AG04449 (cell line): ENCODE measurements at regions of chr17 and their contacts with region 1.

Region 1: GRCh38 chr17:76182016-76182764 is 41.1 kb upstream of the FOXJ1 start:
- DNase-seq: peak; percentile 14
- H3K4me3 ChIP-seq: no peak overlapping the region
- CTCF ChIP-seq: peak; percentile 91

Region 2: DNA sequence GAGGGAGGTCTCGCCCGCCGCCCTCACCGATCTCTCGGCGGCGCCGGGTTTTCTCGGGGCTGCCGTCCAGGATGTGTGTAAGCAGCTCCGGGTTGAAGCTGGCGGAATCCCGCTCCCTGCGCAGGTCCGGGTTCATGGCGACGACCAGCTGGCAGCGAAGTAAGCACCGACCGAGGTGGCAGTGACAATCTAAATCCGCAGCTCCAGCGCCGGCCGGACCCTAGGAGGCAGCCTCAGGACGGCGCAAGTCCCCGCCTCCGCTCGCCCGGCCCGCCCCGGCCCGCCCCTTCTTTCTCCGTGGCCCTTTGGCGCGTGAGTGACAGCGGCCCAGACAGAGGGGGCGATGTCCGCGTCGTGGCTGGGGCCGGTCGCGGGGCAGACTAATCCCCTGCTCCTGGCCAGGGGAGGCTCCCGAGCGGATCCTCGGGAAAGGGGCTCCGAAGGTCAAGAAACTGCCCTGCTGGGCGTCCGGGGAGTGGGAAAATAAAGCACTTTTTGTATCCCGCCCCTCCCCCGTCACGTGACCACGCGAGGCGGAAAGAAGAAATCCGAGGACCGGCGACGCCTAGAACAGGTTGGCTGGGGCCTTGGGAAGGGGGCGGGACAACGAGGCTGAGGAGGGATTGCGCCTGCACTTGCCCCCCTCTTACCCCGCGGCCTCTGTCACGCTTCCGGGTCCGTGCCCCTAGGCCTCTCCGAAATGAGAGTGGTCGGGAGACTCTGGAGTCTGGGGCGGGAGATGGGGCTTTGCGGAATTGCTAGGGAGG is 203.1 kb before region 1 on chr17 and contains the starts of genes ACOX1 and TEN1:
- CTCF ChIA-PET with region 1: no interaction called
- POLR2A ChIA-PET with region 1: no interaction called
- DNase-seq: peak; percentile 84
- H3K4me3 ChIP-seq: peak within 1 kb of the TSS; percentile 89
- CTCF ChIP-seq: peak; percentile 45

Region 3: GRCh38 chr17:76103274-76104139 is 78.7 kb before region 1 on chr17 and contains the start of gene EXOC7:
- CTCF ChIA-PET with region 1: interaction called, 15 read pairs
- POLR2A ChIA-PET with region 1: no interaction called
- DNase-seq: peak; percentile 16
- H3K4me3 ChIP-seq: peak within 1 kb of the TSS; percentile 92
- CTCF ChIP-seq: peak; percentile 10

Region 4: GRCh38 chr17:76141212-76142038 is 40.8 kb before region 1 on chr17 and contains the start of gene FOXJ1:
- CTCF ChIA-PET with region 1: interaction called, 11 read pairs
- POLR2A ChIA-PET with region 1: no interaction called
- DNase-seq: peak; percentile 2
- H3K4me3 ChIP-seq: peak within 1 kb of the TSS; percentile 57
- CTCF ChIP-seq: no peak

Region 5: DNA sequence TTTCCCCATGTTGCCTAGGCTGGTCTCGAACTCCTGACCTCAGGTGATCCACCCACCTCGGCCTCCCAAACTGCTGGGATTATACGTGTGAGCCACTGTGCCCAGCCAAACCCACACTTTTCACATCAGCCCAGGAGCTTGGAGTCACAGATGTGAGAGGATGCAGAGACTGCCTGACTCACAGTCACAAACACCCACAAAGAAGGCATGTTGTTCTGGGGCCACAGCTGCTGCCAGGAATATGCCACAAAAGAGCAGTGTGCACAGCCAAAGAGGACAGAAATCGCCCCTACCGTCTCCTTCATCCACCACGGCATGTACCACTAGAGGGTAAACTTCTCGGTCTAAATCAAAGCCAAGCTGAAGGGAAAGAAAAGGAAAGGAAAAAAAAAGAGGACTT is 16.0 kb before region 1 on chr17:
- CTCF ChIA-PET with region 1: interaction called, 137 read pairs
- POLR2A ChIA-PET with region 1: interaction called, 3 read pairs
- DNase-seq: no peak
- H3K4me3 ChIP-seq: no peak overlapping the region
- CTCF ChIP-seq: no peak

Region 6: GRCh38 chr17:76217081-76217480 is 34.9 kb after region 1 on chr17:
- CTCF ChIA-PET with region 1: interaction called, 13 read pairs
- POLR2A ChIA-PET with region 1: no interaction called
- DNase-seq: no peak
- H3K4me3 ChIP-seq: no peak overlapping the region
- CTCF ChIP-seq: no peak